AG04449 (cell line): ENCODE measurements at regions of chr11 and their contacts with region 1.

Region 1: GRCh38 chr11:17230867-17231851 is 23.4 kb upstream of the PIK3C2A start:
- DNase-seq: no peak
- H3K4me3 ChIP-seq: no peak overlapping the region
- CTCF ChIP-seq: no peak

Region 2: DNA sequence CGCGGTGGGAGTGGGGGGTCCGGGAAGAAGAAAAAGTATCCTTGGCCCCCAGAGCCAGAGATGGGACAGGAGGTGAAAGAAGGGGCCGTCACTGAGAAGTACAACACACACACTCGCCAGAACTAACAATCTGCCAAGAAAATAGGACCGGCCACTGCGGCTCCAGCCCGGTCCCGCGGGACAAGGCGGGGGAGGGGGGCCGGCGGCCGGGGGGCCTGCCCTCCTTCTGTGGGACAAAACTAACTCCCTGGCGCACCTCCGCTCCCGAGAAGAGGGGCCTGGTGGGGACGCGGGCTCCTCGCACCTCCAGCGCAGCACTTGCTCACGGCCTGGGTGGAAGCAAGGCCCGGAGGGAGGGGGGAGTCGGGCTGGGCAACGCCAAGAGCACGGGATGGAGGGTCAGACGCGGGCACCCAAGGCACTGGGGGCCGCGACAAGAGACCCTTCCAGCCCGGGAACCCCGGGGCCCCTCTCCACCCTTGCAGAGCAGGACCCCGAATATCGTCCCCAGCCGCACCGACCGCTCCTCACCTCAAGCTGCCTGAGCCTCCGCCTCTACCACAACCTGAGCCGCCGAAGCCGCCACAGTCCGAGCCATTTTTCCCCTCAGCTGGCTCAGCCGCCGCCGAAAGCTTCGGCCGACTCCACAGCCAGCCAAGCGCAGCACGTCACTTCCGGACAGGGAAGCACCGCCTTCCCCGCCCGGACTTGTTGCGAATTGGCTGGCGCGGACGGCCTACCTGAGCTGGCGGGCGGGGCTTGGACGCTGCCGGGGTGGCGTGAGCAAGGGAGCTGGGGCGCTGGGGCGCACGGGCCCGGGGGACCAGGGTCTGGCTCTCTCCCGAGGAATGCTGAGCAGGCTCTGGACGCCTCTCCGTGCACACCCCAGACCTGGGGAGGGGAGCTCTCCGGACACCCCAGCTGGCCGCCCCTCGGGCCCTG is 23.6 kb before region 1 on chr11 and contains the start of gene PIK3C2A:
- CTCF ChIA-PET with region 1: interaction called, 19 read pairs
- POLR2A ChIA-PET with region 1: no interaction called
- DNase-seq: peak; percentile 54
- H3K4me3 ChIP-seq: peak within 1 kb of the TSS; percentile 90
- CTCF ChIP-seq: no peak

Region 3: DNA sequence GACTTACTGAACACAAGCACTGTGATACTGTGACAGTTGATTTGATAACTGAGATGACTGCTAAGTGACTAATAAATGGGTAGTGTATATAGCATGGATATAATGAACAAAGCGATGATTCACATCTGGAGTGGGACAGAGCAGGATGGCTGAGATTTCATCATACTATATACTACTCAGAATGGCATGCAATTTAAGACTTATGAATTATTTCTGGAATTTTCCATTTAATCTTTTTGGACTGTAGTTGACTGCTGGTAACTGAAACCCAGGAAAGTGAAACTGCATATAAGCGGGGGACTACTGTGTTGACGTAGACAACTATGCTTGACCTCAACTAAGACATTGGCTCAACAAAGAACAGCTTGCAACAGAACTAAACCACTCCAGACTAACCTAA is 25.4 kb after region 1 on chr11:
- CTCF ChIA-PET with region 1: interaction called, 15 read pairs
- POLR2A ChIA-PET with region 1: no interaction called
- DNase-seq: peak; percentile 96
- H3K4me3 ChIP-seq: no peak overlapping the region; the same call in 1 of the 2 replicates
- CTCF ChIP-seq: no peak

Region 4: GRCh38 chr11:17354601-17354991 is 123.4 kb after region 1 on chr11:
- CTCF ChIA-PET with region 1: interaction called, 19 read pairs
- POLR2A ChIA-PET with region 1: no interaction called
- DNase-seq: no peak
- H3K4me3 ChIP-seq: no peak overlapping the region
- CTCF ChIP-seq: peak; percentile 59

Region 5: DNA sequence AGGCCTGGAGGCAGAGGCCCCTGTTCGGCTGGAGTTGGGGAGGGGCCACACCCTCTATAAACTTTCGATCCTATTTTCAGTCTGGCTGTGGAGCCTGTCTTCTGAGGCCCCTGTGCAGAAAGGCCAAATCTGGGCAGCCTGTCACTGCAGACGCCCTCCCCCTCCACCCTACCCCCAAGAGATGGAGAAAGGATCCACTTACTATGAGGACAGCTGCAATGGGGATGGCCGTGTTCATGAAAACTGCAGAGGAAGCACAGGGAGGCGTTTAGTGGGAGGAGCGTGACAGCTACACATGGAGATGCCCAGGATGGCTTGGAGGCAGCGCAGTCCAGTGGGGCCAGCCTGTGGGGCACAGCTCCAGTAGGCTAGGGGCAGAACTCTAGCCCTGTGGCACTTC is 200.8 kb after region 1 on chr11:
- CTCF ChIA-PET with region 1: no interaction called
- POLR2A ChIA-PET with region 1: no interaction called
- DNase-seq: no peak
- H3K4me3 ChIP-seq: no peak overlapping the region
- CTCF ChIP-seq: no peak

Region 6: GRCh38 chr11:17528181-17528691 is 297.1 kb after region 1 on chr11:
- CTCF ChIA-PET with region 1: interaction called, 18 read pairs
- POLR2A ChIA-PET with region 1: no interaction called
- DNase-seq: no peak
- H3K4me3 ChIP-seq: no peak overlapping the region
- CTCF ChIP-seq: peak; percentile 75